Spleen (tissue), 13 donors: ENCODE measurements at regions of chr19 and their contacts with region 1.

Region 1: DNA sequence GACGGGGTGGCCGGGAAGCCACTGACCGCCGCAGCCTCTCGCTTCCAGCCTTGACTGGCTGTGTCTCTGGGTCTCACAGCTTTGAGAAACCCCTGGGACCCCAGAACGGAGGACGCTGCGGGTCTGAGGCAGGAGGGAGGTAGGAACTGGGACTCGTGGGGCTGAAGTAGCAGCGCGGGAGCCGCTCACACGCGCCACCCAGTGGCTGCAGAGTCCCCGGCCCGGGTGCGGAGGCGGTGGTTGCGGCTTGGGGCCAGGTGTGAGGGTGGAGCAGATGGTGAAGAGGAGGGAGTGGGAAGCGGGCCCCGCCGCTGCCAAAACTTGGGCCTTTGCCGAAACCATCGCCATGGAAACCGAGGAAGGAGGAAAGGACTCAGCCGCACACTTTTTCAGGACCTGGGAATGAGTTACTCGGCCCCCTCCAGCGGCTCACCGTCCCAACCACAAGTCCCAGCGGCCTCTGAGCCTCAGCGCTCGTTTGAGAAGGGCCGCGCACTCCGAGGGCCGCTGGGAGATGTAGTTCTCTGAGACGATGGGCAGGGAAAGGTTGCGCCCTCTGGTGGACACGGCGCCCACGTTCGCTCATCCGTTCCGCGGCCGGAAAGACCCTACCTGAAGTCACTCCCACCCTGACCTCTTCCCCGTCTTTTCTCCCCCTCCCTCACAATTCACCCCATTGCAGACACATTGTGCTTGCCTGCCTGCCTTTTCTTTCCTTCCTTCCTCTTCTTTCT is 2.2 kb upstream of the SLC17A7 start:
- DNase-seq: peak; percentile 98
- H3K4me3 ChIP-seq: peak overlapping the region; percentile 65 to 81 (median 76)
- H3K27ac ChIP-seq: peak overlapping the region; percentile 14 to 87 (median 78)
- H3K4me1 ChIP-seq: peaks cover 0 to 63% (median 24%) of the 10 kb centered on the region in 6 donors
- H3K27me3 ChIP-seq: peaks cover 4 to 46% (median 41%) of the 10 kb centered on the region in 7 donors
- CTCF ChIP-seq: peak; percentile 88 to 97 (median 93)
- POLR2A ChIP-seq: peak in 1 of 3 donors; percentile 2

Region 2: GRCh38 chr19:49264258-49264657 is 179.3 kb before region 1 on chr19:
- intact Hi-C with region 1: loop called (anchors 10 kb)
- DNase-seq: no peak
- H3K4me3 ChIP-seq: no peak overlapping the region
- H3K27ac ChIP-seq: no peak overlapping the region
- H3K4me1 ChIP-seq: no peaks in the 10 kb centered on the region
- H3K27me3 ChIP-seq: peaks cover 0 to 22% (median 0%) of the 10 kb centered on the region in 7 donors
- CTCF ChIP-seq: no peak
- POLR2A ChIP-seq: no peak

Region 3: GRCh38 chr19:49331616-49332055 is 111.9 kb before region 1 on chr19:
- intact Hi-C with region 1: no loop called
- DNase-seq: peak; percentile 91
- H3K4me3 ChIP-seq: peak overlapping the region in 1 of 8 donors; percentile 18
- H3K27ac ChIP-seq: peak overlapping the region in 6 of 8 donors; percentile 6 to 95 (median 88)
- H3K4me1 ChIP-seq: peaks cover 6 to 97% (median 89%) of the 10 kb centered on the region in 6 donors
- H3K27me3 ChIP-seq: no peaks in the 10 kb centered on the region
- CTCF ChIP-seq: no peak
- POLR2A ChIP-seq: no peak

Region 4: DNA sequence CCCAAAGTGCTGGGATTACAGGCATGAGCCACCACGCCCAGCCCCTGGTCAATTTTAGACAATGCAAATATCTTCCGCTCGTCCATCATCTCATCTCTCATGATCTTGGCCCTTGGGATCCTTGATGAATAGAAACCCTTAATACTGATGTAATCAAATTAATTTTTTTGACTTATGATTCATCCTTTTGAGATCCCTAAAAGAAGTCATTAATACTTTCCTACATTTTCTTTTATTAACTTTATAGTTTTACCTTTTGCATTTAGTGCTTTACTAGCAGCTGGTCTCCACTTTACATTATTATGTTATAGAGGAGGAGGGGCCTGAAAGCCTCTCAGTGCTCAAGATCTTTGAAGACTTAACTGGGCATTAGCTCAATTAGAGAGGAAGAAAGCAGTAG is 63.1 kb before region 1 on chr19:
- intact Hi-C with region 1: no loop called
- DNase-seq: no peak
- H3K4me3 ChIP-seq: no peak overlapping the region
- H3K27ac ChIP-seq: no peak overlapping the region
- H3K4me1 ChIP-seq: no peaks in the 10 kb centered on the region
- H3K27me3 ChIP-seq: no peaks in the 10 kb centered on the region
- CTCF ChIP-seq: no peak
- POLR2A ChIP-seq: no peak

Region 5: GRCh38 chr19:49391581-49392399 is 51.7 kb before region 1 on chr19:
- intact Hi-C with region 1: loop called (anchors 2 kb)
- DNase-seq: peak; percentile 93
- H3K4me3 ChIP-seq: no peak overlapping the region
- H3K27ac ChIP-seq: peak overlapping the region in 6 of 8 donors; percentile 18 to 71 (median 52)
- H3K4me1 ChIP-seq: peaks cover 0 to 44% (median 13%) of the 10 kb centered on the region in 6 donors
- H3K27me3 ChIP-seq: peaks cover 0 to 19% (median 0%) of the 10 kb centered on the region in 7 donors
- CTCF ChIP-seq: peak; percentile 73 to 91 (median 84)
- POLR2A ChIP-seq: no peak

Region 6: DNA sequence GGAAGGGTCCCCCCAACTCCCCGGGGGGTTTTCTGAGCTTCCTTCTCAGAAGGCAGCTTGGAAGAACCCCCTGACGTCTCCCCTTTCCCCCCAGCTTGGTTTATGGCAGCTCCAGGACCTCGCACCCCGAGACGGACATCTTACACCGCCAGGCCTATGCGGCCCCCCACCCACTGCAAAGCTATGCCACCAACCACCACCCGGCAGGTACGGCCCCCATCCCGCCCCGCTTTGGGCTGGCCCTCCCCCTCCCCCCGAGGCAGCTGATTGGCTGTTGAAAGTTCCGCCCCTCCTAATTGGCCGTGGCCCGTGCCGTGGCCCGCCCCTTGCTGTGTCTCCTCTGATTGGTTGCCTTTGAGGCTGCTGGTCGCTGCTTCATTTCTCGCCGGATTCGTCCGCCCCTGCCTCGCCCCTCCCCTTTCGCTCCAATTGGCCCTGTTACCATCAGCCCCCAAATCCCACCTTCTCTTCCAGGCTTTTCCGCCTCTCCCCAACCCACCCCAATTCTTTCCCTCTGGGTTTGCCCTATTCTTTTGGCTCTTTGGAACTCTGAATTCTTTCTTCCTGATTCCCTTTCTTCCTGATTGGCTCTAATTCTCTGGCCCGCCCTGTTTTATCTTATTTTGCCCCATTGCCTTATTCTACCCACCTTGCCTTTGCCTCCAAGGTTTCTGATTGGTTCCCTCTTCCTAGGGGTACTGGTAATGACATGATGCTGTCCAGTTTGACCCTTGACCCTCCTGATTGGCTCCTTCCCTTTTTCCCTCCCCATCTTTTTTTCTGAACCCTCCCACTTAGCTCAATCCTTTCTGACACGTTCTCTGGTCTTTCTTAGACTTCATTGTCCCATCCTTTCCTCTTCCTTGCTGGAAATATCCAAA is 149.9 kb after region 1 on chr19:
- intact Hi-C with region 1: no loop called
- DNase-seq: peak; percentile 95
- H3K4me3 ChIP-seq: peak overlapping the region in 7 of 8 donors; percentile 76 to 99 (median 96)
- H3K27ac ChIP-seq: peak overlapping the region; percentile 35 to 96 (median 92)
- H3K4me1 ChIP-seq: peaks cover 16 to 63% (median 34%) of the 10 kb centered on the region in 6 donors
- H3K27me3 ChIP-seq: no peaks in the 10 kb centered on the region
- CTCF ChIP-seq: no peak
- POLR2A ChIP-seq: no peak